ENCODE measurements at regions of chr16 and their contacts with region 1.

Region 1: DNA sequence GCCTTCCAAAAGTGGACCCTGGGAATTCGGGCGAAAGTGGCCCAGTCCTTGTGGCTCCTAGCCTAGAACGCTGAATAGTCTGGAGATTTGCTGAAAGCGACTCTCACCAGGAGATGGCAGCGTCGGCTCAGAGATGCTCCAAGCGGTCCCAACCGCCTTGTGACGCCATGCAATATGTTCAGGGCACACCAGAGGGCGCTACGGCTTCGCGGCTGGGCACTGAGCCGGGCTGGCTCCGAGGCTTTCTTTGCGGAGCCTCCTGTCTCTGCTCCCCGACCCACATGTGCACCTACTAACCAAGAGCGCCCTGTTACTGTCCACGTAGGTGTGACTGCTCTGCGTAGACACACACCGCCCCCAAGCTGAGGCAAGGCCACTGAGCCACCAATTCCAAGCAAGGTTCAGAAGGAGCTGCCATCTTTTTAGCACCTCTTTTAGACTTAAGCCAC is 36.9 kb downstream of the SYCE1L start:
- DNase-seq: peak; percentile 93
- H3K4me3 Mint-ChIP-seq: peak overlapping the region; percentile 36
- H3K27ac Mint-ChIP-seq: no peak overlapping the region
- H3K4me1 Mint-ChIP-seq: peaks cover 22% of the 10 kb centered on the region
- H3K27me3 Mint-ChIP-seq: peaks cover 17% of the 10 kb centered on the region
- CTCF ChIP-seq: peak; percentile 100

Region 2: GRCh38 chr16:77308163-77308561 is 72.1 kb after region 1 on chr16:
- CTCF ChIA-PET with region 1: no interaction called
- intact Hi-C with region 1: loop called (anchors 5 kb)
- DNase-seq: no peak
- H3K4me3 Mint-ChIP-seq: no peak overlapping the region
- H3K27ac Mint-ChIP-seq: peak overlapping the region; percentile 22
- H3K4me1 Mint-ChIP-seq: peaks cover 24% of the 10 kb centered on the region
- H3K27me3 Mint-ChIP-seq: no peaks in the 10 kb centered on the region
- CTCF ChIP-seq: no peak

Region 3: DNA sequence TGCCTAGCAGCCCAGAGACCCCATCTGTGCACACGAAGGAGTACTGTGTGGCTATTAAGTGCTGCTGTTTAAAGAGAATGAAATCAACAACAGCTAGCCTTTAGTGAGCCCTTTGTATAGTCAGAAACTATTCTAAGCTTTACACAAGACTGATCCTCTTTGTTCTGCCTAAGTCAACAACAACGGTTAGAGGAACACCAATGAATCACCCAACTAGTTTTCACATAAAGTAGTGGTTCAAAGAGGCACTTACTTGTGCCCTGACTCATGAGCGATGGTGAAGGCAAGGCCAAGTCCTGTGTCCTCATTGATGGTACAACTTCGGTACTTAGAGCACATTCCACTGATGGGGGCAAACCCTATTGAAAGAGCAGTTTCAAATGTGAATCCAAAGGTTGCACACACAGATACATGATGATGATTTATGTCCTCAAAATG is 123.0 kb after region 1 on chr16:
- CTCF ChIA-PET with region 1: no interaction called
- intact Hi-C with region 1: loop called (anchors 5 kb)
- DNase-seq: peak; percentile 55
- H3K4me3 Mint-ChIP-seq: peak overlapping the region; percentile 33
- H3K27ac Mint-ChIP-seq: peak overlapping the region; percentile 74
- H3K4me1 Mint-ChIP-seq: peaks cover 51% of the 10 kb centered on the region
- H3K27me3 Mint-ChIP-seq: no peaks in the 10 kb centered on the region
- CTCF ChIP-seq: no peak

Region 4: GRCh38 chr16:77437859-77438258 is 201.8 kb after region 1 on chr16:
- CTCF ChIA-PET with region 1: no interaction called
- intact Hi-C with region 1: no loop called
- DNase-seq: no peak
- H3K4me3 Mint-ChIP-seq: no peak overlapping the region
- H3K27ac Mint-ChIP-seq: no peak overlapping the region
- H3K4me1 Mint-ChIP-seq: no peaks in the 10 kb centered on the region
- H3K27me3 Mint-ChIP-seq: peaks cover 85% of the 10 kb centered on the region
- CTCF ChIP-seq: no peak

Region 5: DNA sequence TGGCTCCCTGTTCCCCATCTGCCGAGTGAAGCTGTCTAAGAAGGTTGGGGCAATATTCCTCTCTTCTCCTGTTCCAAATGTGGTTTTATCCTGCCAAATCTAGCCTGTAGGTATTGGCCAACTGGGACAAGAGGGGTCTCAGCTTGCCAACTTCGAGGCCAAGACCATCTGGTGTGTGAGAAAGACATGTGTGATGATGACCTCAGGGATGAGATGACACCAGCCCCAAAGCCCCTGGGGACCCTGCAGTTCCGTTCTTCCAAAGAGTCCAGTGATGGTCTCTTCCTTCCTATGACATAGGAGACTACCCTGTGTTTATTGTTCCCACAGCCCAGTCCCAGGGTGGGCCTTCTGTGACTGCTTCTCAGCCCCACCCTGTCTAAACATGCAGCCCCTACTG is 233.5 kb after region 1 on chr16:
- CTCF ChIA-PET with region 1: no interaction called
- intact Hi-C with region 1: no loop called
- DNase-seq: no peak
- H3K4me3 Mint-ChIP-seq: no peak overlapping the region
- H3K27ac Mint-ChIP-seq: no peak overlapping the region
- H3K4me1 Mint-ChIP-seq: no peaks in the 10 kb centered on the region
- H3K27me3 Mint-ChIP-seq: peaks cover 95% of the 10 kb centered on the region
- CTCF ChIP-seq: no peak

Region 6: DNA sequence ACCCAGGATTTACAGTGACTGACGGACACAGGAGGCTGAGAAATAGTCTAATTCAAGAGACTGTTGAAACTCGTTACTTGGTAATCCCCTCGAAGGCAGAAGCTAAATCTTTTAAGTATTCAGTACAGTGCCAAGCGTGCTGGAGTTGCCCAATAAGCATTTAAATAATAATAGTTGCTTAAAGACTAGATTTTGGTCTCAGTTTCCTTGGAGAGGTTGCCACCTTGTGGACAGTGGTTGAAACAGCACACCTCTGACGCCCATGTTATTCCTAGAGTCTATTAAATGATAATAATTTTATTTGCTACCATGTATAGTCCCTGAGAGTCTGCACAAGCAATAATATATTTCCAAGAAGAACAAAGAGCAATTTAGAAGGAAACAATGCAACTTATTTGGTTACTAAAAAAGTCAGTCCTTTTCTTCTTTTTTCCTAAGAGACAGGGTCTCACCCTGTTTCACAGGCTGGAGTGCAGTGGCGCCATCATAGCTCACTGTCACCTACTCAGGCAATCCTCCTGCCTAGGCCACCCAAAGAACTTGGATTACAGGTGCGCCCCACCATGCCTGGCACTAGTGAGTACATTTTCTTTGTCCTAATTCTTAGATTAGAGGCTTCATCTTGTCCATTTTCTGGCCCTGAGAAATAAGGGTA is 348.2 kb after region 1 on chr16:
- CTCF ChIA-PET with region 1: interaction called, 40 read pairs
- intact Hi-C with region 1: loop called (anchors 1 kb)
- DNase-seq: peak; percentile 61
- H3K4me3 Mint-ChIP-seq: no peak overlapping the region
- H3K27ac Mint-ChIP-seq: no peak overlapping the region
- H3K4me1 Mint-ChIP-seq: no peaks in the 10 kb centered on the region
- H3K27me3 Mint-ChIP-seq: peaks cover 65% of the 10 kb centered on the region
- CTCF ChIP-seq: peak; percentile 87

Region 7: DNA sequence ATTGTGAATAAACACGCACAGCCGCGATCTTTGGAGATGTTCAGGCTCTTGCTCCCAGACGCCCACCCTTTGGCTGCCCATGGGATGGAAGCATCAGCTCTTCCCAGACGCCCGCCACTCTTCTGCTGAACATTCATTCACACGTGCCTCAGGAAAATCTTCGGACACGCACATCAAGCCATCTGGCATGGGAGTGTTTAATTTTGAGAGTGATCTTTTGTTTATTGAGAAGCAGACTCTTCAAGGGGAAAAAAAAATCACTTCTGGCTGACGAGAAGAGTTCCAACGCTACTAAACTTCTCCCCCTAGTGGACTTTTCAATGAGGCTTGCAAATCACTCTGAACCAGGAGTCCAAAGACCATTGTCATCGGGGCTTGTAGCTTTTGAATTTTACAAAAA is 424.2 kb after region 1 on chr16:
- CTCF ChIA-PET with region 1: no interaction called
- intact Hi-C with region 1: loop called (anchors 2 kb)
- DNase-seq: peak; percentile 6
- H3K4me3 Mint-ChIP-seq: no peak overlapping the region
- H3K27ac Mint-ChIP-seq: no peak overlapping the region
- H3K4me1 Mint-ChIP-seq: no peaks in the 10 kb centered on the region
- H3K27me3 Mint-ChIP-seq: peaks cover 17% of the 10 kb centered on the region
- CTCF ChIP-seq: peak; percentile 34

Region 8: DNA sequence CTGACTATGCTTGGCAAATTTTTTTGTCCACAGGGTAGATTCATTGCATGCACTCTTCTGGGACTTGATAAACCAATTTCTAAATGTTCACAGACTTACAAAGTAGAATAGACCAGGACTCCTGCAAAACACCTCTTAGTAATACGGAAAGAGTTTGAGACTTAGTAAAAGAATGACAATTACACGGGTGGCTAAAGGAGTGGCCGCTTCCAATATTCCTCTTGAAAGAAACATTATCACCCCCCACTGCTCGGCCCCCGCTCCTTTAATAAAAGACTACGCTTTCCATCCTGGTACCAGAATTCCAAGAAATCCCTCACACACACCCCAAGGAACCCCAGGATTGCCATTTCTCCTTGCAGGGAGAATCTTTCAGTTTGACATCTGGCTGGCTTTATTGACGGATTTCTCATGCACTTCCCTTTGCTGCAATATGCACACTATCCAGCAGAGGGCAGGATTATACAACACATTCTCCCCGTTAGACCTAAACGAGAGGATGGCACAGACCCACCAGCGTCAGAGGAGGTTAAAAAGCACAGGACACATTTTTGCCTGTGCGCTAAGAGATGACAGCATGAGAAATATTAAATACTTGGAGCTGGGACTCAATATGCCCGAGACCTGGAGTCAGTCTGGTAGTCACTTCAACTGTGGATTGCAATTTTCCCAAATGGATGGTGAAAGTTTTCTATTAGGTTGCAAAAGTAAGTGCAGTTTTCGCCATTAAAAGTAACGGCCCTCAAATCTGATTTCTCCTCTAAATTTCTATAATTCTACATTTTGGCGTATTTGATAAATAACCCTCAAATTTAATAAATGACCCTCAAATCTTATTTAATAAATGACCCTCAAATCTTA is 439.6 kb after region 1 on chr16:
- CTCF ChIA-PET with region 1: interaction called, 3 read pairs
- intact Hi-C with region 1: loop called (anchors 5 kb)
- DNase-seq: peak; percentile 75
- H3K4me3 Mint-ChIP-seq: no peak overlapping the region
- H3K27ac Mint-ChIP-seq: no peak overlapping the region
- H3K4me1 Mint-ChIP-seq: no peaks in the 10 kb centered on the region
- H3K27me3 Mint-ChIP-seq: no peaks in the 10 kb centered on the region
- CTCF ChIP-seq: peak; percentile 78

Region 9: GRCh38 chr16:77971306-77972271 is 735.5 kb after region 1 on chr16:
- CTCF ChIA-PET with region 1: no interaction called
- intact Hi-C with region 1: loop called (anchors 5 kb)
- DNase-seq: peak; percentile 81
- H3K4me3 Mint-ChIP-seq: no peak overlapping the region
- H3K27ac Mint-ChIP-seq: no peak overlapping the region
- H3K4me1 Mint-ChIP-seq: no peaks in the 10 kb centered on the region
- H3K27me3 Mint-ChIP-seq: peaks cover 43% of the 10 kb centered on the region
- CTCF ChIP-seq: peak; percentile 74

Measured in Calu3 (cell line).